Panc1 (cell line): ENCODE measurements at regions of chr4 and their contacts with region 1.

Region 1: GRCh38 chr4:148344352-148344751 is 97.9 kb downstream of the NR3C2 start:
- DNase-seq: no peak
- ATAC-seq: no peak
- H3K4me3 ChIP-seq: no peak overlapping the region
- H3K27ac ChIP-seq: no peak overlapping the region
- H3K4me1 ChIP-seq: no peaks in the 10 kb centered on the region
- H3K27me3 ChIP-seq: no peaks in the 10 kb centered on the region
- CTCF ChIP-seq: no peak

Region 2: GRCh38 chr4:148369919-148370318 is 25.6 kb after region 1 on chr4:
- CTCF ChIA-PET with region 1: no interaction called
- POLR2A ChIA-PET with region 1: no interaction called
- in situ Hi-C with region 1: no loop called
- intact Hi-C with region 1: loop called (anchors 1 kb)
- DNase-seq: no peak
- ATAC-seq: no peak
- H3K4me3 ChIP-seq: no peak overlapping the region
- H3K27ac ChIP-seq: no peak overlapping the region
- H3K4me1 ChIP-seq: no peaks in the 10 kb centered on the region
- H3K27me3 ChIP-seq: no peaks in the 10 kb centered on the region
- CTCF ChIP-seq: no peak